Heart left ventricle (tissue), 16 donors: ENCODE measurements at regions of chr2 and their contacts with region 1.

Region 1: GRCh38 chr2:209334198-209335017 is 89.4 kb upstream of the MAP2 start:
- DNase-seq: peak; percentile 27 to 60 (median 46)
- ATAC-seq: peak in 3 of 4 donors; percentile 50 to 52 (median 51)
- H3K4me3 ChIP-seq: no peak overlapping the region
- H3K27ac ChIP-seq: no peak overlapping the region
- H3K4me1 ChIP-seq: peaks cover 0 to 6% (median 0%) of the 10 kb centered on the region in 12 donors
- H3K27me3 ChIP-seq: no peaks in the 10 kb centered on the region
- CTCF ChIP-seq: peak; percentile 82 to 98 (median 94)
- POLR2A ChIP-seq: no peak

Region 2: GRCh38 chr2:209380293-209380692 is 45.9 kb after region 1 on chr2:
- intact Hi-C with region 1: no loop called
- DNase-seq: no peak
- ATAC-seq: no peak
- H3K4me3 ChIP-seq: no peak overlapping the region
- H3K27ac ChIP-seq: no peak overlapping the region
- H3K4me1 ChIP-seq: no peaks in the 10 kb centered on the region
- H3K27me3 ChIP-seq: no peaks in the 10 kb centered on the region
- CTCF ChIP-seq: no peak
- POLR2A ChIP-seq: no peak

Region 3: DNA sequence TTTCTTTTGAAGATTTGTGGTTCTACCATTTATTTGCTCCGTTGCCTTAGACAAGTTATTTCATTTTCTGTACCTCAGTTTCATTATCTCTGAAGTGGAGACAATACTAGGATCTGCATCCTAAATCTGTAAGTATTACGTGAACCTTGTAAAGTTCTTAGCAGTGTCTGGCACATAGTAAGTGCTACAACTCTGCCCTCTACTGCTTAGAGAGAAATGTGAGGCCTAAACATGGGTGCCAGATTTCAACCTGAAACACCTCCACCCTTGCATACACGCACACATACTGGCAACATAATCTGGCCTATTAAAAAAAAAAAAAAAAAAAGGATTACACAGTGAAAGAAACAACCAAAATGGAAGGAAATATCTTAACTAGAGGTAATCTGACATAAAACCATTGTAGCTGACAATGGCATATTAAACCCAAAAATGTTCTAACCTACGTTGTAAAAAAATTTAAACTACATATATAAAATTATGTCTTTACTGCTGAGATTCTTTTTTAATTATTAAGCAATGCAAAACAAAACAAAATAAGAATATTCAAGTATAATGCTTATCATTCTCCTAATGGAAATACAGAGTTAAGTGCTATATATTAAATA is 222.1 kb after region 1 on chr2:
- intact Hi-C with region 1: loop called (anchors 2 to 5 kb)
- DNase-seq: no peak
- ATAC-seq: peak in 3 of 4 donors; percentile 70 to 87 (median 83)
- H3K4me3 ChIP-seq: no peak overlapping the region
- H3K27ac ChIP-seq: no peak overlapping the region
- H3K4me1 ChIP-seq: no peaks in the 10 kb centered on the region
- H3K27me3 ChIP-seq: no peaks in the 10 kb centered on the region
- CTCF ChIP-seq: peak; percentile 30 to 76 (median 58)
- POLR2A ChIP-seq: no peak

Region 4: DNA sequence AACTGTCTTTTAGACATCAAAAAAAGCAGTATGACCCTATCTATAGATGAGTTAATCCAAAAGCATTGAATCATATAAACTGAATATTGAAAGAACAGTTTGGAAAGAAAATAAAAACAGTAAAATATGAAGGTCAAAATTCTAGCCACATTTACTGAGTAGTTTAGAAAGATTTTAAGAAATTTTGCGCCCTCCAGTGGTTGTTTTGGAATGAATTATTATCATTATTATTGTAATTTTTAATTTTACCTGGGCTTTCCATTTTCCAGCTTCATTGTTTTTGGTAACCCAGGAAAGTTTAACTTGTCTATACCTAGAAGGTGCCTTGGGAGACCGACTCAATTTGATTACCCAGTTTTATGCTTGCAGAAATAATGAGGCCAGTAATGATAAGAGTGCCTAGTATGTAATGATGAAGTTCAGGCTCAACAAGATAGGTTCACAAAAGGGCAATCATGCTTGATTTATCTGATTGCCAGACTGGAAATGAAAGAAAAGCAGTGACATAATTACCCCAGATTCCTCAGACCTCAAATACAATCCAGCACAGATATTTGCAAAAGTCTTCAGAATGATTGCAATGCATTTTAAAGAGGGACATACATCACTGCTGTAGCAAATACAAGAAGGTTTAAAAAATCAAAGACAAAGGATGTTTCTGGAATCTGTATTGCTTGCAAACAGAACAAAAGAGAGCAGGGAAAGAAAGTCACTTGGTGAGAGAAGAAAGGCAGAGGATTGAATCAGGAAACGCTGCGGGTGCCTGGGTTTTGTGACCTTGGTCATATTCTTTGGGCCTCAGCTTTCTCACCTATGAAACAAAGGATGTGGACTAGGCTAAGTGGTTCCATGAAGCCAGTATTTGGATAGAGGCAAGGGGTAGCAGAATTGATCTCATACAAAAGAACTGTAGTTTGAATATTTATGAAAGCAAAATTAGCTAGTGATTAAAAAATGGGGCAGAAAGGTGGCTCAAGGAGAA is 243.3 kb after region 1 on chr2:
- intact Hi-C with region 1: loop called in 3 of 10 experiments (anchors 1 to 5 kb)
- DNase-seq: no peak
- ATAC-seq: no peak
- H3K4me3 ChIP-seq: no peak overlapping the region
- H3K27ac ChIP-seq: no peak overlapping the region
- H3K4me1 ChIP-seq: peaks cover 0 to 11% (median 1%) of the 10 kb centered on the region in 12 donors
- H3K27me3 ChIP-seq: no peaks in the 10 kb centered on the region
- CTCF ChIP-seq: peak; percentile 12 to 52 (median 36)
- POLR2A ChIP-seq: no peak

Region 5: GRCh38 chr2:209845679-209846078 is 511.3 kb after region 1 on chr2:
- intact Hi-C with region 1: no loop called
- DNase-seq: no peak
- ATAC-seq: no peak
- H3K4me3 ChIP-seq: no peak overlapping the region
- H3K27ac ChIP-seq: no peak overlapping the region
- H3K4me1 ChIP-seq: no peaks in the 10 kb centered on the region
- H3K27me3 ChIP-seq: no peaks in the 10 kb centered on the region
- CTCF ChIP-seq: no peak
- POLR2A ChIP-seq: no peak

Region 6: GRCh38 chr2:210189452-210190143 is 855.2 kb after region 1 on chr2:
- intact Hi-C with region 1: loop called in 2 of 10 experiments (anchors 5 to 10 kb)
- DNase-seq: no peak
- ATAC-seq: no peak
- H3K4me3 ChIP-seq: no peak overlapping the region
- H3K27ac ChIP-seq: no peak overlapping the region
- H3K4me1 ChIP-seq: no peaks in the 10 kb centered on the region
- H3K27me3 ChIP-seq: no peaks in the 10 kb centered on the region
- CTCF ChIP-seq: no peak
- POLR2A ChIP-seq: no peak